ENCODE measurements at regions of chr12 and their contacts with region 1.

Region 1: DNA sequence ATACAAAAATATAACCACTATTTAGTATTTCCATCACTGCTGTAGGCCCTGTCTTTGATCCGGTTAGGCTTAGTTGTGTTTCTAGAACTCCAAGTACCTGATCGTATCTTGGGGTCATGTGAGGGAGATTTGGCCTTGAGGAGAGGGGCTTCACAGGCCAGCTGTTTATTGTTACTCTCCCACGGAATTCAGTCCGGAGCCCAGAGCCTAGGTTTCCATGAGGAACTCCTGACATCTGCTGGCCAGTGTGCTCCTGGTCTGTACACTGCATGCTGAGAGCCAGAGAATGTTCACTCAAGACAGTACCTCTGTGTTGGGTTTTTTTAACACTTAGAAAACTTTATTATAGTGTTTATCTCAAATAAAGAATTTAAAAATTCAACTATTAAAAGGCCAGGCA is 341.0 kb upstream of the TMEM132C start:
- DNase-seq: peak; percentile 79
- H3K4me3 ChIP-seq: no peak overlapping the region
- H3K27ac ChIP-seq: no peak overlapping the region
- H3K4me1 ChIP-seq: peaks cover 12 to 20% (median 16%) of the 10 kb centered on the region in 4 donors
- H3K27me3 ChIP-seq: no peaks in the 10 kb centered on the region
- CTCF ChIP-seq: peak; percentile 44 to 60 (median 47)
- EP300 ChIP-seq: no peak
- POLR2A ChIP-seq: no peak

Region 2: GRCh38 chr12:127677537-127678131 is 248.3 kb before region 1 on chr12:
- intact Hi-C with region 1: loop called (anchors 5 kb)
- DNase-seq: peak; percentile 89
- H3K4me3 ChIP-seq: no peak overlapping the region
- H3K27ac ChIP-seq: no peak overlapping the region
- H3K4me1 ChIP-seq: peaks cover 0 to 8% (median 6%) of the 10 kb centered on the region in 4 donors
- H3K27me3 ChIP-seq: no peaks in the 10 kb centered on the region
- CTCF ChIP-seq: peak; percentile 65 to 79 (median 68)
- EP300 ChIP-seq: no peak
- POLR2A ChIP-seq: no peak

Region 3: DNA sequence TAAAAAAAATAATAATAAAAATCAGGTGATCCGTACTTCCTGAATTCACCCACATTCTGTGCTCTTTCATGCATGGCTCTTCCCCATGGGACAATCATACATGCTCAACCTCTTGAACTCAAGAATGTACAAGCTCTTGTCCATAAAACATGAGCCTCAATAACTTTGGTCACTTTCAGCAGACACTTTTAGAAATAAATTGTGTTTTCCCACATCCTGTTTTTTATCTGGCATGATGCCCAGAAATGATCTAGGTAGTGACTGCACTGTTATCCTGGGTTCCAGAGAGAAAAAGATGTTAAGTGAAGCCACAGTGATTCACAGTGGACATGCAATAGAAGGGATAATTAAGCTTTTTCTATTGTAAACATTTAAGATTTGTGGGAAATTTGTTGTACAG is 196.6 kb before region 1 on chr12:
- intact Hi-C with region 1: loop called (anchors 10 kb)
- DNase-seq: no peak
- H3K4me3 ChIP-seq: no peak overlapping the region
- H3K27ac ChIP-seq: no peak overlapping the region
- H3K4me1 ChIP-seq: peaks cover 0 to 6% (median 0%) of the 10 kb centered on the region in 4 donors
- H3K27me3 ChIP-seq: no peaks in the 10 kb centered on the region
- CTCF ChIP-seq: no peak
- EP300 ChIP-seq: no peak
- POLR2A ChIP-seq: no peak

Region 4: DNA sequence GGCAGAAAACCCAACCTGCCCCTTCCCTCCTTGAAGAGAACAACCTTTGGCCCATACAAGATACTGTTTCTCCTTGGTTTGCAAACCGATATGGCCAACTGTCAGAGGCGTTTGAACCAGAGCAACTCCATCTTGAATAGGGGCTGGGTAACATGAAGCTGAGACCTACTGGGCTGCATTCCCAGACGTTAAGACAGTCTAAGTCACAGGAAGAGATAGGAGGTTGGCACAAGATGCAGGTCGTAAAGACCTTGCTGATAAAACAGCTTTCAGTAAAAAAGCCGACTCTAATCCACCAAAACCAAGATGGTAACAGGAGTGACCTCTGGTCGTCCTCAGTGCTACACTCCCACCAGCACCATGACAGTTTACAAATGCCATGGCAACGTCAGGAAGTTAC is 298.3 kb after region 1 on chr12:
- intact Hi-C with region 1: no loop called
- DNase-seq: no peak
- H3K4me3 ChIP-seq: no peak overlapping the region
- H3K27ac ChIP-seq: no peak overlapping the region
- H3K4me1 ChIP-seq: no peaks in the 10 kb centered on the region
- H3K27me3 ChIP-seq: peaks cover 0 to 13% (median 0%) of the 10 kb centered on the region in 4 donors
- CTCF ChIP-seq: no peak
- EP300 ChIP-seq: no peak
- POLR2A ChIP-seq: no peak

Measured in esophagus muscularis mucosa (tissue), 4 donors.